ENCODE measurements at regions of chr5 and their contacts with region 1.

Region 1: GRCh38 chr5:178304761-178305645 is 72.4 kb upstream of the PHYKPL start:
- DNase-seq: no peak
- H3K4me3 ChIP-seq: no peak overlapping the region
- H3K27ac ChIP-seq: no peak overlapping the region
- H3K4me1 ChIP-seq: no peaks in the 10 kb centered on the region
- H3K27me3 ChIP-seq: no peaks in the 10 kb centered on the region
- CTCF ChIP-seq: no peak

Region 2: GRCh38 chr5:178314961-178315820 is 10.2 kb after region 1 on chr5:
- CTCF ChIA-PET with region 1: no interaction called
- POLR2A ChIA-PET with region 1: interaction called, 16 read pairs
- intact Hi-C with region 1: no loop called
- DNase-seq: no peak
- H3K4me3 ChIP-seq: no peak overlapping the region
- H3K27ac ChIP-seq: no peak overlapping the region
- H3K4me1 ChIP-seq: no peaks in the 10 kb centered on the region
- H3K27me3 ChIP-seq: no peaks in the 10 kb centered on the region
- CTCF ChIP-seq: no peak

Measured in A673 (cell line).